ENCODE measurements at regions of chr12 and their contacts with region 1.

Region 1: DNA sequence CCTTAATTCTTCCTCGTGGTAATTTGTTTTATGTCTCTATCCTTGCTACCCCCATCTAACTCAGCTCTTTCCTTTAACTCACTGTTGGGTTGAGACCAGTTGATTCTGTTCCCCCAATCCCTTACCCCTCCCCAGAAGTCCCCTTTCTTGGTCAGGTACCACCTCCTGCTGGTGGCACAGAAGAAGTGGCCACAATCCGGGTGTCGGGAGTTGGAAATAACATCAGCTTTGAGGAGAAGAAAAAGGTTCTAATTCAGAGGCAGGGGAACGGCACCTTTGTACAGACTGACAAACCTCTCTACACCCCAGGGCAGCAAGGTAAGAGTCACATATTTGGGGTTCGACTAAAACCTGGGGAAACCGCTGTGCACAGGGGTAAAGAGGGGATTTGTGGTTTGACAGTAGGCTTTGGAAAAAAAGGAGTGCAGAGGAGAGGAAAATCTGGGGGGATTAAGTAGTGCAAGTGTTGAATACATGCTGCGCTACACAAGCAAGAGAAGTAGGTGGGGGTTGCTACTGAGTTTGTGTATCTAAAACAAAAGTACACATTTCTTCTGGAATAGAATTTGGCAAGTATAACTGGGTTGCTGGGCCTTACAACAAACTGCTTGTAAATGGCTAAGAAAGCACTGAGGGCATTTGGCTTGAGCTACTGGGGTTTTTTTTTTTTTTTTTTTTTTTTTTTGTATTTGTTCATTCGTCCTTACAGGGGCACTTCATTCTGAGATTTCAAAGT is 1.3 kb downstream of the A2ML1 start:
- DNase-seq: no peak
- H3K4me3 ChIP-seq: no peak overlapping the region
- H3K27ac ChIP-seq: no peak overlapping the region
- H3K4me1 ChIP-seq: peaks cover 18% of the 10 kb centered on the region
- H3K27me3 ChIP-seq: no peaks in the 10 kb centered on the region
- CTCF ChIP-seq: peak; percentile 46; the same call in 1 of the 2 replicates

Region 2: GRCh38 chr12:8914716-8915526 is 91.2 kb after region 1 on chr12:
- CTCF ChIA-PET with region 1: interaction called, 5 read pairs
- POLR2A ChIA-PET with region 1: interaction called, 5 read pairs
- intact Hi-C with region 1: loop called (anchors 10 kb)
- DNase-seq: peak; percentile 68 to 88
- H3K4me3 ChIP-seq: peak overlapping the region; percentile 93
- H3K27ac ChIP-seq: no peak overlapping the region
- H3K4me1 ChIP-seq: peaks cover 57% of the 10 kb centered on the region
- H3K27me3 ChIP-seq: no peaks in the 10 kb centered on the region
- CTCF ChIP-seq: no peak

Region 3: DNA sequence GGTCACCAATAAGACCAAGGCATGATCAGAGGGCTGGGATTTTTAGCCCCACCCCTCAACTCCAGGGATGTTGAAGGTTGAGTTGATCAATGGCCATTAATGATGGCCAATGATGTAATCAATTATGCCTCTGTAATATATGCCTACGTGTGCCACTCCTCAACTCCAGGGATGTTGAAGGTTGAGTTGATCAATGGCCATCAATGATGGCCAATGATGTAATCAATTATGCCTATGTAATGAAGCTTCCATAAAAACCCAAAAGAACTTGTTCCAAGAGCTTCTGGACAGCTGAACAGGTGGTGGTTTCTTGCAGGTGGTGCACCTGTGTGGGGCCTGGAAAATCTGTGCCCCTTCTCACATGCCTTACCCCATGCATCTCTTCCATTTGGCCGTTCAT is 198.9 kb after region 1 on chr12:
- CTCF ChIA-PET with region 1: no interaction called
- POLR2A ChIA-PET with region 1: no interaction called
- intact Hi-C with region 1: no loop called
- DNase-seq: no peak
- H3K4me3 ChIP-seq: no peak overlapping the region
- H3K27ac ChIP-seq: no peak overlapping the region
- H3K4me1 ChIP-seq: no peaks in the 10 kb centered on the region
- H3K27me3 ChIP-seq: 0 out of 2 replicates have a peak, but pooled peaks cover 5% of the 10 kb centered on the region
- CTCF ChIP-seq: no peak